ENCODE measurements at regions of chr17 and their contacts with region 1.

Region 1: GRCh38 chr17:60568561-60568960 is 31.4 kb upstream of the PPM1D start:
- DNase-seq: no peak
- ATAC-seq: no peak
- H3K4me3 ChIP-seq: no peak overlapping the region
- H3K27ac ChIP-seq: no peak overlapping the region
- H3K4me1 ChIP-seq: no peaks in the 10 kb centered on the region
- H3K27me3 ChIP-seq: no peaks in the 10 kb centered on the region; a peak in 1 of 4 replicates
- CTCF ChIP-seq: no peak
- EP300 ChIP-seq: no peak
- POLR2A ChIP-seq: no peak
- RAD21 ChIP-seq: no peak

Region 2: DNA sequence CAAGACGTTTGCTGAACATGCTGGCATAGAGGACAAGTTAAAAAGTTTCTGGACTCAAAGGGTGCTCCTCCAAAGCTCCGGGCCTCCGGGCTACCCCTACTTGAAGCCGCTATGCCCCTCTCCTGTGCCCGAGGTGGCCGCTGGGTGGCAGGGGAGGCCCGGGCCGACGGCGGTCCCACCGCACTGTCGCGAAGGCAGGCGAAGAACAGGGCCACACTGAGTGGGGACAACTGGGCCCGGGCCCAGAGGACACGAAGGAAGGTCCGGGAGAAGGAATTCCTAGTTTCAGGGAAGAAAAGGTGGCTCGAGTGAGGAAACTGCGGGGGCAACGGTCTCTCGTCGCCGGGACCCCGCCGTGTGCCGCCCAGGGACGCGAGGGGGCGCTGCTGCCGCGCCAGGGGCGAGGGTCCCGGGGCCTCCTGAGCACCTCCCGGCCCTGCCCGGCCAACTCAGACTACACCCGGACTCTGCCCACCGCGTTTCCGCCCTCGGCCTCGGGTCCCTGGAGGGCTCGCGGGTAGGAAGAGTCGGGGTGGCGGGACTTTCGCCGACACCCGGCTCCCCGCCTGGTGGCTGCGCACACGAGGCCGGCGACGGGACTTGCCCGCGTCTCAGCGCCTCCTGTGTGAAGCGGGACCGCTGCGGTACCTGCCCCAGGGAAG is 147.2 kb before region 1 on chr17:
- CTCF ChIA-PET with region 1: interaction called, 4 read pairs
- POLR2A ChIA-PET with region 1: no interaction called
- RAD21 ChIA-PET with region 1: no interaction called
- SMC1A ChIA-PET with region 1: interaction called, 3 read pairs
- in situ Hi-C with region 1: no loop called
- intact Hi-C with region 1: loop called (anchors 5 kb)
- DNase-seq: no peak
- ATAC-seq: peak; percentile 99
- H3K4me3 ChIP-seq: peak overlapping the region; percentile 61
- H3K27ac ChIP-seq: no peak overlapping the region
- H3K4me1 ChIP-seq: no peaks in the 10 kb centered on the region
- H3K27me3 ChIP-seq: no peaks in the 10 kb centered on the region
- CTCF ChIP-seq: peak; percentile 57 to 94 (median 90)
- EP300 ChIP-seq: no peak
- POLR2A ChIP-seq: peak; percentile 75
- RAD21 ChIP-seq: peak; percentile 64

Region 3: GRCh38 chr17:60594734-60595133 is 26.2 kb after region 1 on chr17:
- CTCF ChIA-PET with region 1: interaction called, 10 read pairs
- POLR2A ChIA-PET with region 1: interaction called, 4 read pairs
- RAD21 ChIA-PET with region 1: no interaction called
- SMC1A ChIA-PET with region 1: no interaction called
- in situ Hi-C with region 1: no loop called
- intact Hi-C with region 1: no loop called
- DNase-seq: no peak
- ATAC-seq: no peak
- H3K4me3 ChIP-seq: no peak overlapping the region
- H3K27ac ChIP-seq: no peak overlapping the region
- H3K4me1 ChIP-seq: no peaks in the 10 kb centered on the region
- H3K27me3 ChIP-seq: no peaks in the 10 kb centered on the region
- CTCF ChIP-seq: no peak
- EP300 ChIP-seq: no peak
- POLR2A ChIP-seq: no peak
- RAD21 ChIP-seq: no peak

Measured in GM12878 (cell line).